Activated T-helper 2 cell treated with anti-CD3 and anti-CD28 coated beads, Interferon-gamma antibody, Interleukin-2, Interleukin-4, amounts not matched to agents 10 μg/mL and 5 μg/mL and 100 μg/mL, durations not matched to agents 14 hours and 24 hours and 36 hours (primary cell): ENCODE measurements at regions of chr18 and their contacts with region 1.

Region 1: DNA sequence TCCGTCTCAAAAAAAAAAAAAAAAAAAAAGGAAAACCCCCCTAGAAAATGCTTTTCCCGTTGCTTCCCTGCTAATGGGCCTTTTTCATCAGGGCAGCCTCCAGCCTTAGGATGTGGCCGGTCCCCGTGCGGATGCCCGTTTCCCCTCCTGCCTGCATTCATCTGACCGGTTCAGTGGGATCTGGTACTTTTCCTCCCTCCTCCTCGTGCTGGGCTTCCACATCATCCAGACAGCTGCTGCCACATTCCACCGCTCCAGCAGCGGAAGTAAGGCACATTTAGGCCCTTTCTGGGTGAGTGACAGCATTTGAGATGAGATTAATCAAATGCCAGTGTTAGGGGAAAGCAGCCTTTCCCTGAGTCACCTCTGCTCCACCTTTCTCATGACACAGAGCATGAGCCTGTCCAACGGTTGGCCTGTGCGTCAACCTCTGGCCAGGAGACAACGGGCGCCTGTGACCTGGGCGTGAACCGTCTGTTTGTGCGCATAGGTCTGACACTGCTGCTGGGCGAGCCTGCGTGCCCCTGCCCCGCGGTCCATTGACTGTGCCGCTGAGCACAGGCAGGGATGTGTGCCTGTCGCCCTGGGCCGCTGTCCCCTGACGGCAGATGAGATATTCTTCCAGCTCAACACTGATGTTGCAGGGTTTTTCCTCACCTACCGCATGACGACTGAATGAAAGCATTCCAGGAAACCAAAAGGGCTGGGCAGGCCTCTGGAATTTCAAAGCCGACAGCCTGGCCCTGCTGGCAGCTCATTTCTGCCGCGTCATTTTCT is 174.0 kb downstream of the TGIF1 start:
- DNase-seq: no peak
- H3K4me3 Mint-ChIP-seq: peak overlapping the region; percentile 60
- H3K27ac Mint-ChIP-seq: peak overlapping the region; percentile 92
- H3K4me1 Mint-ChIP-seq: peaks cover 37% of the 10 kb centered on the region
- H3K27me3 Mint-ChIP-seq: no peaks in the 10 kb centered on the region

Region 2: GRCh38 chr18:3604498-3605408 is 19.2 kb before region 1 on chr18:
- intact Hi-C with region 1: loop called (anchors 1 kb)
- DNase-seq: no peak
- H3K4me3 Mint-ChIP-seq: no peak overlapping the region
- H3K27ac Mint-ChIP-seq: no peak overlapping the region
- H3K4me1 Mint-ChIP-seq: peaks cover 16% of the 10 kb centered on the region
- H3K27me3 Mint-ChIP-seq: no peaks in the 10 kb centered on the region

Region 3: GRCh38 chr18:3634250-3634939 is 10.4 kb after region 1 on chr18:
- intact Hi-C with region 1: loop called (anchors 1 kb)
- DNase-seq: no peak
- H3K4me3 Mint-ChIP-seq: no peak overlapping the region
- H3K27ac Mint-ChIP-seq: peak overlapping the region; percentile 21
- H3K4me1 Mint-ChIP-seq: peaks cover 23% of the 10 kb centered on the region
- H3K27me3 Mint-ChIP-seq: no peaks in the 10 kb centered on the region

Region 4: DNA sequence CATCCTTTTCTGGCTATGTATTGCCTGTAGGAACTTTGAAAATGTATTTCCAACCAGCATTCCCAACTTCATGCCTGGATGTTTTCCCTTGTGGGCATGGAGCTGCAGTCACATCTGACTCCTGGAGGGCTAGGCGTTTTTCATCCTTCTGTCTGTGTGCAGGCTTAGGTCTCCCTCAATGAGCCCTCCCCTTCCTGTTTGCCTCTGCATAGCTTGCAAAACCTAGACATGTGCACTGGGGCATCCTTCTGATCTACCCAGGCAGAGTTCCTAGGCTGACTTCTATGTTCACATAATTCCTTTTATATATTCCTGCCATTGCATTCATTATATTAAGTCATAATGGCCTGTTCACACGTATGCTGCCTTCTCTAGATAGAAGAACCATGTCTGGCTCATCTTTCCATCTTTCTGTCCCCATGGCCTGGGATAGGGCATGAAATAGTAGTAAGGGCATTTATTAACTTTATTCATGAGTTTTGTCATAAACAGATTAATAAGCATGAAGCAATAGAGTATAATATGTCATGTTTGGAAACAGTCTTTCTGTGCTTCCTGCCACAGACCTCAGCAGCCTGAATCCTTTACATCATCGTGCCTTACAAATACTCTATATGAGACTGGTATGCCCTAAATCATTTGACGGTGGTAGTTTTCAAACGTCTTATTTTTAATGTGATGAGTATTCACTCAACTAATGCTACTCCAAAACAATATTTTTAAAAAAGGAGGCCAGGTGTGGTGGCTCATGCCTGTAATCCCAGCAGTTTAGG is 21.6 kb after region 1 on chr18:
- intact Hi-C with region 1: loop called (anchors 1 kb)
- DNase-seq: no peak
- H3K4me3 Mint-ChIP-seq: no peak overlapping the region
- H3K27ac Mint-ChIP-seq: no peak overlapping the region
- H3K4me1 Mint-ChIP-seq: peaks cover 44% of the 10 kb centered on the region
- H3K27me3 Mint-ChIP-seq: no peaks in the 10 kb centered on the region